PC-9 (cell line): ENCODE measurements at regions of chr5 and their contacts with region 1.

Region 1: GRCh38 chr5:95961617-95962474 is at the start of gene ELL2:
- DNase-seq: peak; percentile 98
- H3K4me3 ChIP-seq: peak within 1 kb of the TSS; percentile 65
- H3K27ac ChIP-seq: peak within 1 kb of the TSS; percentile 76
- H3K4me1 ChIP-seq: peaks cover 57% of the 10 kb centered on the region
- H3K27me3 ChIP-seq: no peaks in the 10 kb centered on the region
- CTCF ChIP-seq: no peak
- total RNA-seq, gene ELL2: 25.5 and 27.6 TPM in 2 replicates

Region 2: GRCh38 chr5:95382801-95383200 is 579.0 kb before region 1 on chr5:
- CTCF ChIA-PET with region 1: no interaction called
- POLR2A ChIA-PET with region 1: no interaction called
- intact Hi-C with region 1: no loop called
- DNase-seq: no peak
- H3K4me3 ChIP-seq: no peak overlapping the region
- H3K27ac ChIP-seq: no peak overlapping the region
- H3K4me1 ChIP-seq: no peaks in the 10 kb centered on the region
- H3K27me3 ChIP-seq: no peaks in the 10 kb centered on the region
- CTCF ChIP-seq: no peak

Region 3: DNA sequence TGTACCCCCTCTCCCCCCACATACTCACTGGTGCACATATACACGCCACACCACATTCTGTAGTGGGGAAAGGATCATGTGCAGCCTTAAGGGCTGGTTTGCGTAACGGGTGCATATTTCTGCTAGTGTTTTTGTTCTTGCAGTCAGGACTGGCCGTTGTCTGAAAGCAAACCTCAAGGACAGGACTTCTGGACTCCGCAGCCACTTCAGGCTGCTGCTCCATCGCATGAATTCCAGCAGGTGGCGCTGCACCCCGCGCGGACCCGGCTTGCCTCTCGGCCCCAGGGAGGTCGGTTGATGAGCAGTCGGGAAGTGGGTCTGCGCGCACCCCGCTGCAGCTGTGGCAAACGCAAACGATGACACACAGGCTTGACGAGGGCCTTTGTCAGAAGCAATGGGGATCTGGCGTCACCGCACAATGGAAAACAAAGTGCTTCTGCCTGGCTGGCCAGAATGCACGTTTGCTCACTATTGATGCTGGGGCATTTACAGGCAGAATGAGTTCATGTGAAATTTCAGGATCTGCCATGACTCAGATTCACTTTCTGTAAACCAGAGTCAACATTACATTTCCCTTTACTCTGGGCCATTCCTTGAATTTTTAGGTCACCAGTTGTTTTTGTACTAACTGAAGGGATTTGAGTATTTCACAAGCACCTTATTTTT is 103.1 kb before region 1 on chr5:
- CTCF ChIA-PET with region 1: no interaction called
- POLR2A ChIA-PET with region 1: no interaction called
- intact Hi-C with region 1: loop called (anchors 1 kb)
- DNase-seq: peak; percentile 89 to 97
- H3K4me3 ChIP-seq: peak overlapping the region; percentile 38
- H3K27ac ChIP-seq: peak overlapping the region; percentile 95
- H3K4me1 ChIP-seq: peaks cover 55% of the 10 kb centered on the region
- H3K27me3 ChIP-seq: no peaks in the 10 kb centered on the region
- CTCF ChIP-seq: peak; percentile 99

Region 4: DNA sequence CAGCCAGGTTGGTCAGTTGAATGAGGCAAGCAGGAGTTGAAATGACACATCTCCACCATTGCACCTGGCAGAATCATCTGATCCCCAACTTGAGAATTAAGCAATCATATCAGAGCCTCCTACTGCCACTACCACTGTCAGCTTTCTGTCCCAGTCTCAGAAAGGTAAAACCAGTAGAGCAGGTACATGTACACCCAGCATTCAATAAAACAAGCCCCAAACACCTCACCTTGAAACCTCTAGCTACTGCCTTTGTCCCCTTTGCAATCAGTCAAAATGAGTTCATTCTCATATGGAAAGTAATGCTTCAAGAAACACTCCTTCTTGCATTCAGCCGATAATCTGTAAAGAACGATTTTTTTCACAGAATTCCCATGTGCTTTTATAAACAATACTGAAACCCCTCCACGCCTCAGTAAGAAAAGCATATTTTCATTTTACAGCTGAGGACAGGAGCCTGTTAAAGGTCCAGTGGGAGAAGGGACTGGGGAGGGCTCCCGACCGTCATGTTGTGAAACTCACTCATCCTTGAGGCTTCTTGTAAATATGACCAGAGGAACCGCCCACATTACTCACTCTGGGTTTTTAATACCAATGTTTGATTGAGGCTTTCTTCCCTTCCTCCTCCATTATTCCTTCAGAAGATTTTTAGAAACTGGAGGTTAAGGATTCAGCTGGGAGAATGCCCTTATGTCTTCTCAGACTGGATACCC is 78.1 kb before region 1 on chr5:
- CTCF ChIA-PET with region 1: no interaction called
- POLR2A ChIA-PET with region 1: no interaction called
- intact Hi-C with region 1: loop called (anchors 5 kb)
- DNase-seq: peak; percentile 27 to 89
- H3K4me3 ChIP-seq: peak overlapping the region; percentile 22; the same call in 1 of the 2 replicates
- H3K27ac ChIP-seq: peak overlapping the region; percentile 75
- H3K4me1 ChIP-seq: peaks cover 26% of the 10 kb centered on the region
- H3K27me3 ChIP-seq: no peaks in the 10 kb centered on the region
- CTCF ChIP-seq: no peak

Region 5: DNA sequence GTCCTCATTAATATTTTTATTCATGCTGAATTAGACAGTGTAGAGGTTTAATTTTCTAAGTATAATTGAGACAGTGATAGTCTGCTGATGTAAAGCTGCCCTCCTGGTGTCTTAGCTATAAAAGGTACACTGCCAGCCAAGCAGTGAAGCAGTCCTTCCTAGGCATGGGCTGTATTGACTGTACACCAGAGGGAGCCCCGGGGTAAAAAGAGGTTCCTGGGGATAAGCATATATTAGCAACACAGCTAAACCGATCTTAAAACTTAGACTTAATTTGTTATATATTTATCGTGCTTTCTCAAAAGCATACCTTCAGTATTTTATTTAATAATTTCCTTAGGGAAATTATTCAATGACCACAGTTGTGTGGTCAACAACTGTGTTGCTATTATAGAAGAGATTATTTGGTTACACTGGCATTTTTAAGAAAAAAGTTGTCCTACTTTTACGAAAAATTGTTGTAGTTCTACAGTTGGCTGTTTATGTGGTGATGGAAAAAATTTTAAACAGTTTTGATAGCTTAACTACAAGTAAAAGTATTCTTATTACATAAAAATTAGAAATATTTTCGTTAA is 69.0 kb before region 1 on chr5:
- CTCF ChIA-PET with region 1: no interaction called
- POLR2A ChIA-PET with region 1: no interaction called
- intact Hi-C with region 1: loop called (anchors 5 kb)
- DNase-seq: peak in 1 of 2 experiments; percentile 37
- H3K4me3 ChIP-seq: no peak overlapping the region
- H3K27ac ChIP-seq: no peak overlapping the region
- H3K4me1 ChIP-seq: no peaks in the 10 kb centered on the region
- H3K27me3 ChIP-seq: no peaks in the 10 kb centered on the region
- CTCF ChIP-seq: peak; percentile 57

Region 6: DNA sequence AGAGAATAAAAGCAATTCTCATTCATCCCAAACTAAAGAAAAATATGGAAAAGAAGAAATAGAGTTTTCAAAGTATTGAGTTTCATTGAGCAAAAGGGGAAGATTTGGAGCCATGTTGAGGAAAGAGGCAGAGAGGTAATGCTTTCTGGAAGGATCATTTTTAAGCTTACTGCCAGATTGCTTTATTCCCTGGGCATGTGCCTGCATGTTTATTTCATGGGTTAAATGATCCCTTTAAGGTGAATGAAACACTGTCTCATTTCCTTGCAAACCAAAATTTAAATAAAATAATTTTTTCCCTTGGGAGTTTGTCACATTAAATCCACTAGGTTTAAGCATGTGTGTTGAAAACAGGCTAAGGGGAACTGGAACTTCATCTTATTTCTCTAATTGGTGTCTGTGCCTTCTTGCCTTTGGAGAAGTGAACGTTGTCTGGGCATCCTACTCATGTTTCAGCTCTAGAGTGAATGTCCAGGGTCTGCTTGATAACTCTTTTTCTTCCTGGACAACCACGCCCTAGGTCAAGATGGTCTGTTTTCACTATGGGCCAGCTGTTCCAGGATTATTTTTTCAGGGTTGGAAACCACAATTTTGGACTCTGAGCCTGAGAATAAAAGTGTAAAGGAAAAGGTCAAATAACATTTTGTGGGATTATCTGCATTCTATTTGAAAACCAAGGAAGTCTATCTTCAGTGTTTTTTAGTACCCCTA is 113.9 kb after region 1 on chr5:
- CTCF ChIA-PET with region 1: no interaction called
- POLR2A ChIA-PET with region 1: interaction called, 4 read pairs
- intact Hi-C with region 1: loop called (anchors 2 kb)
- DNase-seq: no peak
- H3K4me3 ChIP-seq: no peak overlapping the region
- H3K27ac ChIP-seq: no peak overlapping the region
- H3K4me1 ChIP-seq: peaks cover 48% of the 10 kb centered on the region
- H3K27me3 ChIP-seq: no peaks in the 10 kb centered on the region
- CTCF ChIP-seq: no peak

Region 7: GRCh38 chr5:96093890-96094381 is 132.1 kb after region 1 on chr5:
- CTCF ChIA-PET with region 1: interaction called, 4 read pairs
- POLR2A ChIA-PET with region 1: no interaction called
- intact Hi-C with region 1: loop called (anchors 1 kb)
- DNase-seq: peak; percentile 21 to 97
- H3K4me3 ChIP-seq: no peak overlapping the region
- H3K27ac ChIP-seq: peak overlapping the region; percentile 88
- H3K4me1 ChIP-seq: peaks cover 36% of the 10 kb centered on the region
- H3K27me3 ChIP-seq: no peaks in the 10 kb centered on the region
- CTCF ChIP-seq: no peak

Region 8: GRCh38 chr5:96256778-96257470 is 295.1 kb after region 1 on chr5:
- CTCF ChIA-PET with region 1: no interaction called
- POLR2A ChIA-PET with region 1: interaction called, 3 read pairs
- intact Hi-C with region 1: loop called (anchors 1 kb)
- DNase-seq: no peak
- H3K4me3 ChIP-seq: no peak overlapping the region
- H3K27ac ChIP-seq: no peak overlapping the region
- H3K4me1 ChIP-seq: peaks cover 56% of the 10 kb centered on the region
- H3K27me3 ChIP-seq: no peaks in the 10 kb centered on the region
- CTCF ChIP-seq: no peak